ENCODE measurements at regions of chr5 and their contacts with region 1.

Region 1: DNA sequence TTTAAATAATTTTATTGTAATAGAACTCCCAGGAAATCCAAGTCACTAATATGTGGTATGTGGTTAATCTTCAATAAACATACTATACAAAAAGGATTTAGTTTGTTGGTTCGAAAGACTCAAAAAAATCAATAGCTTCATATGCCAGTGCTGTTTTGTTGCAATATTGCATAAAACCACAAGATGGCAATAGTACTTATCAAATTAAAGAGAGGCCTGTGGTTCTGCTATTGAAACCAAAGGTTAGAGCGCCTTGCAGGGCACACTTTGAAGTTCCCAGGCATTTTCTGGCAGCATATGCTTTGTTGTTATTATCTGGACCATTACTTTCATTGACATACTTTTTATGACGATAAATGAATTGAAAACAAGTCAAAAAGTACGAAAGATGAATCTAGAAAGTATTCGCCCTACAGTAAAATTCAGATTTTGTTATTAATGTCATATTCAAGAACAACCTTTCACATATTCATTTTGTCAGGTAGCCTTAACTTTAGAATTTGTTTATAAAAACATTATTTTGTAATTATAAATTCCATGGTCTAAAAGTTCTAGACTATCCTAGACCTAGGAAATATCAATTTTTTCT is 316.3 kb downstream of the MCTP1 start:
- DNase-seq: peak; percentile 82
- H3K4me3 ChIP-seq: no peak overlapping the region
- H3K27ac ChIP-seq: no peak overlapping the region
- H3K4me1 ChIP-seq: no peaks in the 10 kb centered on the region
- H3K27me3 ChIP-seq: no peaks in the 10 kb centered on the region
- CTCF ChIP-seq: peak; percentile 70

Region 2: GRCh38 chr5:95081500-95081960 is 112.9 kb after region 1 on chr5:
- CTCF ChIA-PET with region 1: interaction called, 3 read pairs
- POLR2A ChIA-PET with region 1: no interaction called
- intact Hi-C with region 1: loop called (anchors 2 kb)
- DNase-seq: peak; percentile 89
- H3K4me3 ChIP-seq: peak overlapping the region; percentile 44
- H3K27ac ChIP-seq: peak overlapping the region; percentile 68
- H3K4me1 ChIP-seq: peaks cover 20% of the 10 kb centered on the region
- H3K27me3 ChIP-seq: no peaks in the 10 kb centered on the region
- CTCF ChIP-seq: no peak

Region 3: GRCh38 chr5:95178046-95178651 is 209.5 kb after region 1 on chr5:
- CTCF ChIA-PET with region 1: interaction called, 7 read pairs
- POLR2A ChIA-PET with region 1: no interaction called
- intact Hi-C with region 1: loop called (anchors 5 kb)
- DNase-seq: peak; percentile 95
- H3K4me3 ChIP-seq: peak overlapping the region; percentile 9
- H3K27ac ChIP-seq: peak overlapping the region; percentile 74
- H3K4me1 ChIP-seq: peaks cover 26% of the 10 kb centered on the region
- H3K27me3 ChIP-seq: no peaks in the 10 kb centered on the region
- CTCF ChIP-seq: peak; percentile 72

Region 4: GRCh38 chr5:95238560-95239325 is 270.1 kb after region 1 on chr5:
- CTCF ChIA-PET with region 1: interaction called, 3 read pairs
- POLR2A ChIA-PET with region 1: no interaction called
- intact Hi-C with region 1: loop called (anchors 2 kb)
- DNase-seq: peak; percentile 54
- H3K4me3 ChIP-seq: no peak overlapping the region
- H3K27ac ChIP-seq: no peak overlapping the region
- H3K4me1 ChIP-seq: no peaks in the 10 kb centered on the region
- H3K27me3 ChIP-seq: peaks cover 6% of the 10 kb centered on the region
- CTCF ChIP-seq: peak; percentile 59

Region 5: GRCh38 chr5:95261437-95262175 is 293.0 kb after region 1 on chr5:
- CTCF ChIA-PET with region 1: interaction called, 9 read pairs
- POLR2A ChIA-PET with region 1: no interaction called
- intact Hi-C with region 1: loop called (anchors 2 kb)
- DNase-seq: peak; percentile 47
- H3K4me3 ChIP-seq: no peak overlapping the region
- H3K27ac ChIP-seq: no peak overlapping the region
- H3K4me1 ChIP-seq: no peaks in the 10 kb centered on the region
- H3K27me3 ChIP-seq: no peaks in the 10 kb centered on the region
- CTCF ChIP-seq: peak; percentile 75

Region 6: DNA sequence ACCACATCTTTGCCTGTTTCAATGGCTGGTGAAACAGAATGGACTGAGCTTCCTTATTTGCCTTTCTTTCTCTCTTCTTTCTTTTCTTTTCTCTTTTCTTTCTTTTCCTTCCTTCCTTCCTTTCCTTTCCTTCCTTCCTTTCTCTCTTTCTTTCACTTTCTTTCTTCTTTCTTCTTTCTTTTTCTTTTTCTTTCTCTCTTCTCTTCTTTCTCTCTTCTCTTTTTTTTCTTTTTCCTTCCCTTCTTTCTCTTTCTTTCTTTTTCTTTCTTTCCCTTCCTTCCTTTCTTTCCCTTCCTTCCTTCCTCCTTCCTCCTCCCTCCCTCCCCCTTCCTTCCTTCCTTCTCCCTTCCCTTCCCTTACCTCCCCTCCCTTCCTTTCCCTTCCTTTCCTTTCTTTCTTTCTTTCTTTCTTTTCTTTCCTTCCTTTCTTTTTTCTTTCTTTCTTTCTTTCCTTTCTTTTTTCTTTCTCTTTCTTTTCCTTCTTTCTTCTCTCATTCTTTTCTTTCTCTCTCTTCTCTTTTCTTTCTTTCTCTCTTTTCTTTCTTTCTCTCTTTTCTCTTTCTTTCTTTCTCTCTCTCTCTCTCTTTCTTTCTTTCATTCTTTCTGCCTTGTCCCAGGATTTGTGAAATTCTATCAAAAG is 366.4 kb after region 1 on chr5:
- CTCF ChIA-PET with region 1: no interaction called
- POLR2A ChIA-PET with region 1: no interaction called
- intact Hi-C with region 1: no loop called
- DNase-seq: no peak
- H3K4me3 ChIP-seq: no peak overlapping the region
- H3K27ac ChIP-seq: no peak overlapping the region
- H3K4me1 ChIP-seq: no peaks in the 10 kb centered on the region
- H3K27me3 ChIP-seq: no peaks in the 10 kb centered on the region
- CTCF ChIP-seq: no peak